ENCODE measurements at regions of chr10 and their contacts with region 1.

Region 1: DNA sequence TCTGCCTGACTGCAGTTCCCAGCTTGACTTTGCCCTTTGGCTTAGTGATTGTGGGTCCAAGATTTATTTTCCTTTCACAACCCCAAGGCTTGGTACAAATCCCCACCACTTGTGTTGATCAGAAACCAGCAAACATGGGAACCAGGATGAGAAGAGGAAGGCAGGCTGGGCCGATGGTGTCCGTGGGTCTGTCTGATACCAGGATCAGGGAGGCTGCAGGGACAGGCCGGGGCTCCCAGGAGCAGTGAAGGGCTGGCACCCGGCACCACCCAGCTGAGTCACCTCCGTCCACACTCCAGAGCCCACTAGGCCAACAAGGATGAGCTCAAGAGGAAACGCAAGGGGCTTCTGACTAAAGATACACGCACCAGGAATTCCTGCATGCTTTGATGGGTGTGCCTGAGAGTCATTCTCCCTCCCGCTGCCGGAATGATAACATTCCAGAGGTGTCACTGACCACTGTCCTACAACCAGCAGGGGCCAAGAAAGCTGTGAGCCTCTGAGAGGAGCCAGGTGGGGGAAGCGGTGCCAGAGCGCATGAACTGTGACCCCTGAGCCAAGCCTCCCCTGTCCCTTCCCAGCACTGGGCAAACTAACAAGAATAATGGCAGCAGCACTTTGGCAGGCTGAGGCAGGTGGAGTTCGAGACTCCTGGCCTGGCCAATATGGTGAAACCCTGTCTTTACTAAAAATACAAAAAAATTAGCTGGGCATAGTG is 29.2 kb upstream of the PROSER2 start:
- DNase-seq: no peak
- H3K4me3 ChIP-seq: no peak overlapping the region
- H3K27me3 ChIP-seq: peaks cover 3% of the 10 kb centered on the region
- CTCF ChIP-seq: no peak

Region 2: DNA sequence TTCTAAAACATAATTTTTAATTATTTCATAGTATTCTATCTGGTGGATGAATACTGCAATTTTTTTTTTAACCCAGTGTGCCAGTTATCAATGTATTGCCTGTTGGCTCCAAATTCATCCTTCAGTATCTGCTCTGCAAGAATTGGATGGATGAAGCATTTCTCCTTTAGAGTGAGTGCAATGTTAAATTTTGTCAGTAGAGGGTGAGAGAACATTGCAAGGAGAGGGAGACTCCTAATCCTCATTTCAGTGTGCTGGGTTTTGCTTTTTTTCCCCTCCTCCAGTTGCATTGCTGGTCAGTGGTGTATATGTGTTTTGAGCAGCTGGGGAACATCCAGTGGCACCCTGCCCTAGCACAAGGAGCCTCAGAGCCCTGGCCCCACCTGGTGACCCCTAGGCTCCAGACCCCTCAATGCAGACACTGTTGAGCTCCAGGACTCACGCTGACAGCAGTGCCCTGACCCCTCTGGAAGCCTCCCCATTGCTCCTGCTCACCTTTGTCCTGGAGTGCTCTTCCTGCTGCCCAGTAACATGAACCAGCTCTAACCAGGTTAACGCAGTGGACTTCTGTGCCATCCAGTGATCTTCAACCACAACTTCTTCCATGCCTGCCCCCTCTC is 381.9 kb before region 1 on chr10:
- CTCF ChIA-PET with region 1: no interaction called
- POLR2A ChIA-PET with region 1: no interaction called
- DNase-seq: no peak
- H3K4me3 ChIP-seq: no peak overlapping the region
- H3K27me3 ChIP-seq: no peaks in the 10 kb centered on the region
- CTCF ChIP-seq: no peak

Region 3: DNA sequence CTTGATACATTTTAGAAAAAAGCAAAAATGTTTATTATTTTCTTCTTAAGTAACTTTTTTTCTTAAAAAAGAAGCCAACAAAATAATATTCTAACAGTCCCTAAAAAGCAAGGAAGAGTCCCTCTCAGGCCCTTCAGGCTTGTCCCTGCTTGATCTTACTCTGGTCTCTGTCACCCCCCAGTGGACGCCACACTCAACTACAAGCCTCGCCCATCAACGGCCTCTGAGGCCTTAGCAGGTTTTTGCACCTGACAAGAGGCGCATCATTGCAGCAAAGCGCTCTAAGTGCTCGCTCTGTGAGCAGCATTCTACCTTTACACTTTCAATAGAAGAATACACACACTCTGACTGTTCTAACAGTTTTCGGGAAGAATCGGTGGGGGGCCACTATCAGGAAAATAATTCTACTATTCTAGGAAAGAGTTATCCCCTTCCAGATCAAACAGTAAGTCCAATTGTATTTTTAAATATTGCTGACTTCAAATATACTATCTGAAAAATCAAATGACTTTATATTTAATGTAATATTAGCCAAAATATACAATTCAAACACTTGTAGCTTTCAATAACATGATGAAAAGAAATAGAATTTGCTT is 321.7 kb before region 1 on chr10:
- CTCF ChIA-PET with region 1: no interaction called
- POLR2A ChIA-PET with region 1: no interaction called
- DNase-seq: no peak
- H3K4me3 ChIP-seq: no peak overlapping the region
- H3K27me3 ChIP-seq: no peaks in the 10 kb centered on the region
- CTCF ChIP-seq: peak; percentile 85

Region 4: GRCh38 chr10:11782793-11783557 is 10.9 kb before region 1 on chr10:
- CTCF ChIA-PET with region 1: interaction called, 20 read pairs
- POLR2A ChIA-PET with region 1: interaction called, 13 read pairs
- DNase-seq: no peak
- H3K4me3 ChIP-seq: no peak overlapping the region
- H3K27me3 ChIP-seq: peaks cover 2% of the 10 kb centered on the region; the same call in 1 of the 2 replicates
- CTCF ChIP-seq: peak; percentile 71

Region 5: GRCh38 chr10:11946652-11947051 is 152.7 kb after region 1 on chr10:
- CTCF ChIA-PET with region 1: no interaction called
- POLR2A ChIA-PET with region 1: no interaction called
- DNase-seq: no peak
- H3K4me3 ChIP-seq: no peak overlapping the region
- H3K27me3 ChIP-seq: no peaks in the 10 kb centered on the region
- CTCF ChIP-seq: no peak